ENCODE measurements at regions of chr12 and their contacts with region 1.

Region 1: GRCh38 chr12:45170456-45171042 is 45.3 kb upstream of the ANO6 start:
- H3K4me3 Mint-ChIP-seq: no peak overlapping the region
- H3K27ac Mint-ChIP-seq: no peak overlapping the region
- H3K4me1 Mint-ChIP-seq: peaks cover 6% of the 10 kb centered on the region
- H3K27me3 Mint-ChIP-seq: no peaks in the 10 kb centered on the region

Region 2: GRCh38 chr12:44960856-44961255 is 209.7 kb before region 1 on chr12:
- intact Hi-C with region 1: no loop called
- H3K4me3 Mint-ChIP-seq: no peak overlapping the region
- H3K27ac Mint-ChIP-seq: no peak overlapping the region
- H3K4me1 Mint-ChIP-seq: no peaks in the 10 kb centered on the region
- H3K27me3 Mint-ChIP-seq: no peaks in the 10 kb centered on the region

Region 3: GRCh38 chr12:45388545-45388944 is 218.0 kb after region 1 on chr12:
- intact Hi-C with region 1: loop called (anchors 1 kb)
- H3K4me3 Mint-ChIP-seq: no peak overlapping the region
- H3K27ac Mint-ChIP-seq: no peak overlapping the region
- H3K4me1 Mint-ChIP-seq: no peaks in the 10 kb centered on the region
- H3K27me3 Mint-ChIP-seq: no peaks in the 10 kb centered on the region

Region 4: GRCh38 chr12:45415393-45415817 is 244.9 kb after region 1 on chr12:
- intact Hi-C with region 1: loop called (anchors 10 kb)
- H3K4me3 Mint-ChIP-seq: no peak overlapping the region
- H3K27ac Mint-ChIP-seq: no peak overlapping the region
- H3K4me1 Mint-ChIP-seq: peaks cover 4% of the 10 kb centered on the region
- H3K27me3 Mint-ChIP-seq: no peaks in the 10 kb centered on the region